ENCODE measurements at regions of chr2 and their contacts with region 1.

Region 1: GRCh38 chr2:225122583-225123486 is 80.6 kb upstream of the DOCK10 start:
- DNase-seq: peak; percentile 65
- ATAC-seq: no peak
- H3K4me3 ChIP-seq: no peak overlapping the region
- H3K27ac ChIP-seq: no peak overlapping the region
- H3K4me1 ChIP-seq: peaks cover 52% of the 10 kb centered on the region
- H3K27me3 ChIP-seq: no peaks in the 10 kb centered on the region
- CTCF ChIP-seq: peak; percentile 45

Region 2: GRCh38 chr2:225002039-225002655 is 120.7 kb before region 1 on chr2:
- CTCF ChIA-PET with region 1: no interaction called
- POLR2A ChIA-PET with region 1: no interaction called
- intact Hi-C with region 1: loop called (anchors 1 kb)
- DNase-seq: peak; percentile 79
- ATAC-seq: peak; percentile 81
- H3K4me3 ChIP-seq: no peak overlapping the region
- H3K27ac ChIP-seq: no peak overlapping the region
- H3K4me1 ChIP-seq: no peaks in the 10 kb centered on the region
- H3K27me3 ChIP-seq: no peaks in the 10 kb centered on the region
- CTCF ChIP-seq: peak; percentile 80

Region 3: GRCh38 chr2:225164401-225165050 is 41.7 kb after region 1 on chr2:
- CTCF ChIA-PET with region 1: no interaction called
- POLR2A ChIA-PET with region 1: no interaction called
- intact Hi-C with region 1: loop called (anchors 2 kb)
- DNase-seq: no peak
- ATAC-seq: no peak
- H3K4me3 ChIP-seq: no peak overlapping the region
- H3K27ac ChIP-seq: peak overlapping the region; percentile 3; the same call in 1 of the 2 replicates
- H3K4me1 ChIP-seq: peaks cover 11% of the 10 kb centered on the region; the same call in 1 of the 2 replicates
- H3K27me3 ChIP-seq: no peaks in the 10 kb centered on the region
- CTCF ChIP-seq: no peak

Region 4: DNA sequence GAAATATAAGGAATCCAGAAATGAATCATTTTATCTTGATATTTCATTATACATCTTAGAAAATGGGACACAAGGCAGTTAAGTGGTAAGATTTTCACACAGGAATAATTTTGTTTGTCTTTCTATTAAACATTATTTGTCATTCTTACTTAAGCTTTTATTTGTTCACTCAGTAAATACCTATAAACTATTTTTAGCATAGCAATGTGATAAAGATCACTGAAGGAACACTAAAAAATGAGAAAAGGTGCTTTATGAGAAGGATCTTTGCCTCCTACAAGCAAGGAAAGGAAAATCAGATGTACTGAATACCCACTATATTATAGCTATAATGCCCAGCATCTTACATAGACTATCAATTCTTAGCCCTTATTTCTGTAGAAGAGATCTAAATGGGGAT is 100.5 kb after region 1 on chr2:
- CTCF ChIA-PET with region 1: no interaction called
- POLR2A ChIA-PET with region 1: no interaction called
- intact Hi-C with region 1: loop called (anchors 1 kb)
- DNase-seq: peak; percentile 76
- ATAC-seq: peak; percentile 96
- H3K4me3 ChIP-seq: no peak overlapping the region; the same call in 1 of the 2 replicates
- H3K27ac ChIP-seq: peak overlapping the region; percentile 88
- H3K4me1 ChIP-seq: peaks cover 19% of the 10 kb centered on the region
- H3K27me3 ChIP-seq: no peaks in the 10 kb centered on the region
- CTCF ChIP-seq: no peak

Region 5: GRCh38 chr2:225411452-225411851 is 288.6 kb after region 1 on chr2:
- CTCF ChIA-PET with region 1: no interaction called
- POLR2A ChIA-PET with region 1: no interaction called
- intact Hi-C with region 1: loop called (anchors 10 kb)
- DNase-seq: peak; percentile 29
- ATAC-seq: peak; percentile 27; the same call in 1 of the 2 replicates
- H3K4me3 ChIP-seq: no peak overlapping the region
- H3K27ac ChIP-seq: no peak overlapping the region
- H3K4me1 ChIP-seq: no peaks in the 10 kb centered on the region
- H3K27me3 ChIP-seq: peaks cover 30% of the 10 kb centered on the region; the same call in 1 of the 2 replicates
- CTCF ChIP-seq: peak; percentile 41; the same call in 1 of the 2 replicates

Region 6: DNA sequence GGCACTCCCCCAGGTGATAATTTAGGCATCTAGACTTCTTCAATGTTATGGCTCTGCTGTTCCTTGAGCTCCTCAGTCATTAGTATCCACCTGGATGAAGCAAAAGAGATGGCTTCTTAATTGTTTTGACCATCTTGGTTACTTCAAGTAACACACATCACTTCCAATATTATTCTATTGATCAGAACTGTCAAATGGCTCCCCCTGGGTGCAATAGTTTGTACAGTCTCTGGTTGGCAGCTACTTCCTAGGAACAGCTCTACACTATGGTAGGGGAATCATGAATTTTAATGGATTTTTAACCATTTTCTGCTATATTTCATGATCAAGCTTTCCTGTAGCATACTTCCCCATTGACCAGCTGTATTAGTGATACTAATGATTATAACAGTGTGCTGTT is 433.6 kb after region 1 on chr2:
- CTCF ChIA-PET with region 1: no interaction called
- POLR2A ChIA-PET with region 1: no interaction called
- intact Hi-C with region 1: loop called (anchors 10 kb)
- DNase-seq: peak; percentile 5
- ATAC-seq: no peak
- H3K4me3 ChIP-seq: no peak overlapping the region
- H3K27ac ChIP-seq: no peak overlapping the region
- H3K4me1 ChIP-seq: peaks cover 7% of the 10 kb centered on the region; the same call in 1 of the 2 replicates
- H3K27me3 ChIP-seq: peaks cover 15% of the 10 kb centered on the region; the same call in 1 of the 2 replicates
- CTCF ChIP-seq: peak; percentile 36; the same call in 1 of the 2 replicates

Measured in PC-3 (cell line).